GM10248 (cell line): ENCODE measurements at regions of chr6 and their contacts with region 1.

Region 1: GRCh38 chr6:41591859-41592502 is 45.8 kb downstream of the FOXP4 start:
- DNase-seq: peak; percentile 89
- CTCF ChIP-seq: peak; percentile 80

Region 2: GRCh38 chr6:40328405-40328987 is 1263.5 kb before region 1 on chr6:
- CTCF ChIA-PET with region 1: no interaction called
- POLR2A ChIA-PET with region 1: no interaction called
- DNase-seq: no peak
- CTCF ChIP-seq: peak; percentile 55

Region 3: GRCh38 chr6:41463062-41463930 is 128.7 kb before region 1 on chr6:
- CTCF ChIA-PET with region 1: interaction called, 151 read pairs
- POLR2A ChIA-PET with region 1: no interaction called
- DNase-seq: peak; percentile 81
- CTCF ChIP-seq: peak; percentile 72

Region 4: GRCh38 chr6:41581381-41581991 is 10.5 kb before region 1 on chr6:
- CTCF ChIA-PET with region 1: interaction called, 16 read pairs
- POLR2A ChIA-PET with region 1: no interaction called
- DNase-seq: no peak
- CTCF ChIP-seq: no peak

Region 5: DNA sequence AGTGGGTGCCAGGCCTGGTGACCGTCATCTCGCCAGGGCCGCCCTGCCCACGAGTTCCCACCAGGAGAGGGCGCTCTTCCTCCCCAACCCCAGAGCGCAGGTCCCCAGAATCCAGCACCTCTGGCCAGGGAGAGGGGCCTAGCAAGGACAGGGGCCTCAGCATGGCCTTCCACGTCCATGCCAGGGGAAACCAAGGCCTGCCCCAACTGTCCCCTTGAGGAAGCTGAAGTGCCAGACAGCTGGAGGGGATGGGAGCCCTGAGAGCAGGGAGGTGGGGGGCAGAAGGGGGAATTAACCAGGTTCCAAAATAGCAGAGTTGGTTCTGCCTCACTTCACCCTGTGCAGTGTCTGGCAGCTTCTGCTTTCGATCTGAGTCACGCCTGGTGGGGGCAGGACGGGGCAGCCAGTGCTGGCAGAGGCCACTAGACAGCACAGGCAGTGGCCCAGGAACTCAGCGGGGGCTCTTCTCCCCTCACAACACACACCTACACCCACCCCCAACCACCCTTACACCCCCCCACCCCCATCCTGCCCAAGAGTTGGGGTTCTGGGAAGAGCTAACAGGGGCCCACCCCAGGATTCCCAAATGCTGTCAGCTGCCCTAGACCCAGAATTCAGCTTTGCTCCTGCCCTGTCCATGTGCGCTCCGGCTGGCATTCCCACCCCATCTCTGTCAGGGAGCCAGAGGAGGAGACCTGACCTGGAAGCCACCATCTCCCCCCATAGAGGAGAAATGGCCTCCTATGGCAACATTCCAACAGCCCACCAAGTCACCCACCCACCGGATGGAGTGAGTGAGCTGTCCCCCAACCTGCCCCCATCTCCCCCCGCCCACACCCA is 114.2 kb after region 1 on chr6:
- CTCF ChIA-PET with region 1: no interaction called
- POLR2A ChIA-PET with region 1: no interaction called
- DNase-seq: peak; percentile 92
- CTCF ChIP-seq: peak; percentile 90